HEK293T (cell line): ENCODE measurements at regions of chr1 and their contacts with region 1.

Region 1: GRCh38 chr1:226201029-226201593 is 14.6 kb upstream of the ACBD3 start:
- DNase-seq: peak; percentile 52

Region 2: DNA sequence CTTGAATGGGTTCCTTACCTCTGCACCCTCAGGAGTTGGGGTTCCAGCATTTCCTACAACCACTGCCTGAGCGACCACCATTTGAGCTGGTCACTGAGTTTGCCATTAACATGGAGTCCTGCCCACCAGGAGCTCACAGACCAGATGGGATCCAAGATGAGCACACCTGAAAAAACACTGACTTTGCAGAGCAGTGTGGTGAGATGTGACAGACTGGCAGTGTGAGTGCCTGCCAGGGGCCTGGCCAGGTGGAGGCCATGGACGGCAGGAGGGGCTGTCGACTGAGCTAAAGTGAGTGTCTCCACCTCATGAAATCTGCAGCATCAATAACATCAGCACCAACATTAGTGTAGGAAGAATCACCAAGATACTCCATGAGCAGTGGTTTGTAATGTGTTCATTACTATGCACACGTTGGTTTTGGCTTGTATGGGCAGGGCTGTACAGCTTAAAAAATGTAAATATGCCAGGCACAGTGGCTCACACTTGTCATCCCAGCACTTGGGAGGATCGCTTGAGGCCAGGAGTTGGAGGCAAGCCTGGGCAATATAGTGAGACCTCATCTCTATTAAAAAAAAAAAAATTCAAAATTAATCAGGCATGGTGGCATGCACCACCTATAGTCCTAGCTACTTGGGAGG is 10.2 kb after region 1 on chr1:
- CTCF ChIA-PET with region 1: interaction called, 10 read pairs
- POLR2A ChIA-PET with region 1: no interaction called
- DNase-seq: no peak